ENCODE measurements at regions of chr6 and their contacts with region 1.

Region 1: GRCh38 chr6:119110601-119111548 is 32.4 kb upstream of the FAM184A start:
- DNase-seq: peak in 23 of 42 donors; percentile 14 to 79 (median 44)

Region 2: DNA sequence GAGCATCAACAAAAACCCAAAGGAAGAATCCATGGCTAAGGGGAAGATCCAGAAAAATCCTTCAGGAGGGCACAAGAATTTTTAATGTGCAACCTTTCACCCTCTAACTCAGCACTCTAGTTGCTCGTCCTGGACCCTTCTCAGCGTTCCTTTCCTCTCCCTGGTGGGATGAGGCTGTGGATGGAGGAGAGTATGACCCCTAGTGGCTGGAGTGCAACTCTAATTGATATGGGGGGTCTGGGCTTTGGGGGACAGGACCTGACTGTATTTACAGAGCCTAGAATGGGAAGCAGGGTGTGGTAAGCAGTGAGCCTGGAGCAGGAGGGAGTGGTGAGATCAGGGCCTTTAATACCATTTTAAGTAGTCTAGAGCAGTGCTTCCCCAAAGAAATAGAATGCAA is 375.6 kb before region 1 on chr6:
- intact Hi-C with region 1: no loop called
- DNase-seq: peak in 13 of 42 donors; percentile 15 to 69 (median 39)

Region 3: GRCh38 chr6:118968416-118968815 is 142.5 kb before region 1 on chr6:
- intact Hi-C with region 1: loop called (anchors 2 kb)
- DNase-seq: peak in 4 of 42 donors; percentile 7 to 31 (median 12)

Measured in head of caudate nucleus (tissue), 42 donors.